Transverse colon (tissue), 4 donors: ENCODE measurements at regions of chr1 and their contacts with region 1.

Region 1: DNA sequence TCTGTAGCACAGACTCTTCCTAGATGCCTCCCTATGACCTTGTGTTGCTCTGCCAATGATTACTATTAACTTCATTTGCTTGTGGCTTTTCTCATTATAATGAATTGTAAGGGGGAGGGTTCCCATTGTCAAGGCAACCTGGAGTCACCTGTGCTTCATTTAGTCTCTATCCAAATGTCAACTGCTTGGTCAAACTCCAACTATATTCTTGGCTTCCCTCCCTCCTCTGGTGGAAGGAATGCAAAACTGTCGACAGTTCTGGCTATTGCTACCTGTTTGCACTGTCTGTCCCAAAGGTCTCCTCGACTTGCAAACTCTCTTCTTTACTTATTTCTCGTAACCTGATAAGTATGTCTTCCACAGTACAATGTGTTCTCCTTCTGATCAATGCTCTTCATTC is 100.3 kb downstream of the CACNA1E start:
- DNase-seq: peak; percentile 14
- H3K4me3 ChIP-seq: no peak overlapping the region
- H3K27ac ChIP-seq: no peak overlapping the region
- H3K4me1 ChIP-seq: no peaks in the 10 kb centered on the region
- H3K27me3 ChIP-seq: no peaks in the 10 kb centered on the region
- CTCF ChIP-seq: peak in 4 of 5 experiments; percentile 14 to 32 (median 28)
- EP300 ChIP-seq: no peak
- POLR2A ChIP-seq: no peak

Region 2: GRCh38 chr1:181541947-181542346 is 41.7 kb before region 1 on chr1:
- in situ Hi-C with region 1: no loop called
- intact Hi-C with region 1: loop called (anchors 1 kb)
- DNase-seq: no peak
- H3K4me3 ChIP-seq: no peak overlapping the region
- H3K27ac ChIP-seq: no peak overlapping the region
- H3K4me1 ChIP-seq: no peaks in the 10 kb centered on the region
- H3K27me3 ChIP-seq: peaks cover 4% of the 10 kb centered on the region
- CTCF ChIP-seq: no peak
- EP300 ChIP-seq: no peak
- POLR2A ChIP-seq: no peak

Region 3: DNA sequence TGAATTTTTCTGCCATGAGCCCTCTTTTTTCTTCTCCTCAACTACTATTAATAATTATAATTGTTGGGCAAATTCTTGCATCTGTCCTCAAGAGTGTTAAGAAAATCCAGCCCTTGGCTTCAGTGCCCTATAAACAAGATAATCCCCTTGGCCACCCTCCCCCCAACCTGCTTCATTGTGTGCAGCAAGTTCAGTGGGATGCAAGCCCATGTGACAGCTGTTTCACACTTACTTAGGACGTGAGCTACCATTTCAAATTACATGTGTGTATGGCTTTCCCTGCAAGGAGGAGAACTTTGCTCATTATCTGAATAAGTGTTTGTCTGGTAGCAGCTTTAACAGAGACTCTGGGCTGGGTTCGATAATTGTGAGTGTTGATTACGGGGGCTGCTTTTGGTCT is 175.9 kb after region 1 on chr1:
- in situ Hi-C with region 1: no loop called
- intact Hi-C with region 1: no loop called
- DNase-seq: no peak
- H3K4me3 ChIP-seq: no peak overlapping the region
- H3K27ac ChIP-seq: no peak overlapping the region
- H3K4me1 ChIP-seq: no peaks in the 10 kb centered on the region
- H3K27me3 ChIP-seq: no peaks in the 10 kb centered on the region
- CTCF ChIP-seq: no peak
- EP300 ChIP-seq: no peak
- POLR2A ChIP-seq: no peak